ENCODE measurements at regions of chr14 and their contacts with region 1.

Region 1: GRCh38 chr14:101774006-101774795 is 12.7 kb downstream of the PPP2R5C start:
- DNase-seq: peak in 6 of 10 donors; percentile 39 to 73 (median 64)
- H3K4me3 ChIP-seq: peak overlapping the region in 5 of 59 donors; percentile 1 to 17 (median 11)
- H3K27ac ChIP-seq: peak overlapping the region; percentile 27 to 90 (median 79)
- H3K27me3 ChIP-seq: no peaks in the 10 kb centered on the region
- CTCF ChIP-seq: no peak

Region 2: DNA sequence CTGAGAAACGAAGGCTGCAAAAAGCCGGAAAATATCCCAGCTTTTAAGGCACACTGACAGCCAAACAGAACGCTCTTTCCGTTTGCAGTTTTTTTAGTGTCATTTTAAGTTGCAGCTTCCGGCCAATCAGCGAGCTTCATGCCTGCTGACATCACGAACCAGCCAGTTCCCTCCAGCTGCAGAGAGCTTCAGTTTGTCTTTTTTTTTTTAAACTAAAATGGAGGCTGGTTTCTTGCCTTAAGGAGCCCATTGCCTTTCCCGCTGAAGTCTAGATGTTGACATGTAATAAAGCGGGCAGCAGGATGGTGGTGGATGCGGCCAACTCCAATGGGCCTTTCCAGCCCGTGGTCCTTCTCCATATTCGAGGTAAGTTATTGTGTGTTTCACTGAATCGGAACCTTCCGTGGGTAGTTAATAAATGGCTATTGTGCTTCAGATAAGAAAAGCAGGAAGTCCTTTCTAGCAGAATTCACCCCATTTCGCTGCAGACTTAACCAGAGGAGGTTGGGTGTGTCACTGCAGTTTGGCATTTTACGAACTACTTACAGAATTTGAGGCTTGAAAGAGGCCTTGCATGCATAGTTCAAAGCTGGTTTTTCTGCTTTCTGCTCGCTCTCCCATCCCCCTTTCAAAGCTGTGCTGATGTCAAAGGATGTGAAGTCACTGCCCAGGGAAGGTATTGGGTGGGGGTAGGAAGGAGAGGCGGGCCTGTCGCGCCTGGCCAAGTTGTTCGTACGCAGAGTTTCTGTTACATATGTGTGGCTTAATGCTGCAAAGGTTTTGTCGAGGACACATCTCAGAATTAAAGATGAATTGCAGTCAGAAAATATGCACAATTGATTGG is 35.7 kb after region 1 on chr14:
- intact Hi-C with region 1: loop called in 1 of 2 experiments (anchors 5 kb)
- DNase-seq: peak; percentile 71 to 95 (median 86)
- H3K4me3 ChIP-seq: peak overlapping the region; percentile 44 to 99 (median 74)
- H3K27ac ChIP-seq: peak overlapping the region; percentile 90 to 100 (median 98)
- H3K27me3 ChIP-seq: no peaks in the 10 kb centered on the region
- CTCF ChIP-seq: peak in 3 of 56 donors; percentile 12 to 13 (median 12)

Region 3: DNA sequence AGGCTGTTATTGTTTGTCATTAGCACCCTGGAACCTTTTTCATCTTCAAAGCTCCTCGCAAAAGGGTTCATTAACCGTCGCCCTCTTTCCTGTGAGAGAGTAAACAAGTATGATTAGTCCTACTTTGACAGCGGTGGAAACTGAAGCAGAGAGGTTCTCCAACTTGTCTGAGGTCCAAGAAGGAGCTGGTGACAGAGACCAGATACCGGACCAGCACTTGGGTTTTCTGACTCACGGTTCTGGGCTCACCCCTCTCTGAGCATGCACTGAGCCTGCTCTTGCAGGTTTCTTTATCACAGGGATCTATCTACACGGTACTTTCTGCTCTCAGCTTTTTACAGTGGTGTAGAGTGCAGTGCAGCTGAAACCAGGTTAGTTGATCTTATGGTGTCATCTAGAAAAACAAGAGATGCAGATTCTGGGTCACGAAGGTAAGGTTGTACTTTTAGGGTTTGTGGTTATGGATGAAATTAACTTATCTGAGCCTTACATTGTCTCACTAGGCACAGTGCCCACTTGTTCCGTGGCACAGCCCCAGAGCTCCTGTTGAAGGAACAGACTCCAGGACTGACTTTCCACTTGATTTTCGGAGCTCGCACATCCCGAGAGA is 49.4 kb after region 1 on chr14:
- intact Hi-C with region 1: loop called in 1 of 2 experiments (anchors 10 kb)
- DNase-seq: peak in 2 of 10 donors; percentile 36 to 57
- H3K4me3 ChIP-seq: peak overlapping the region in 57 of 59 donors; percentile 1 to 60 (median 36)
- H3K27ac ChIP-seq: peak overlapping the region in 51 of 59 donors; percentile 2 to 81 (median 63)
- H3K27me3 ChIP-seq: no peaks in the 10 kb centered on the region
- CTCF ChIP-seq: no peak

Region 4: DNA sequence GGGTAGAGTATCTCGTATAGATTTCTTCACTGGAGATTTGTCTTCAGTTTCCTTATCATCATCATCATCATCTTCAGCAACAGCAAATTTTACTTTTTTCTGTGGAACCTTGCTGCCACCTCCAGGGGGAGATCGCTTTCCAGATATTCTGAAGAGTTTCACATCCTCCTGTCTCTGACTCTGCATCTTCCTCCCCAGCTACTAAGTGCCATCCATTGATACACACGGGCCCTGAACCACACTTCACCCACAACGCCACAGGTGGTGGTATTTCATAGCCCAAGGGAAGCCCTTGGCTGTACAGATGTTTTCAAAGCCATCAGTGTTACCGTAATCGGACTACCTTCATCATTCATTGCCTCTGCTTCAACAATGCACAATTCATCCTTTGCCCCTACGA is 69.5 kb after region 1 on chr14:
- intact Hi-C with region 1: loop called in 1 of 2 experiments (anchors 5 kb)
- DNase-seq: no peak
- H3K4me3 ChIP-seq: no peak overlapping the region
- H3K27ac ChIP-seq: peak overlapping the region in 8 of 59 donors; percentile 1 to 43 (median 10)
- H3K27me3 ChIP-seq: no peaks in the 10 kb centered on the region
- CTCF ChIP-seq: peak in 54 of 56 donors; percentile 17 to 66 (median 46)

Region 5: GRCh38 chr14:101947906-101948665 is 173.9 kb after region 1 on chr14:
- intact Hi-C with region 1: loop called in 1 of 2 experiments (anchors 5 kb)
- DNase-seq: peak; percentile 97 to 100 (median 100)
- H3K4me3 ChIP-seq: peak overlapping the region; percentile 65 to 100 (median 87)
- H3K27ac ChIP-seq: peak overlapping the region; percentile 83 to 100 (median 98)
- H3K27me3 ChIP-seq: no peaks in the 10 kb centered on the region
- CTCF ChIP-seq: peak in 26 of 56 donors; percentile 3 to 51 (median 16)

Measured in dorsolateral prefrontal cortex (tissue), 120 donors.